T-cell (primary cell): ENCODE measurements at regions of chr12 and their contacts with region 1.

Region 1: GRCh38 chr12:32076941-32077340 is 29.7 kb upstream of the BICD1 start:
- DNase-seq: no peak
- ATAC-seq: no peak
- H3K4me3 ChIP-seq: no peak overlapping the region
- H3K4me3 Mint-ChIP-seq: no peak overlapping the region
- H3K27ac ChIP-seq: no peak overlapping the region
- H3K27ac Mint-ChIP-seq: no peak overlapping the region
- H3K4me1 ChIP-seq: no peaks in the 10 kb centered on the region
- H3K4me1 Mint-ChIP-seq: no peaks in the 10 kb centered on the region
- H3K27me3 ChIP-seq: no peaks in the 10 kb centered on the region
- H3K27me3 Mint-ChIP-seq: no peaks in the 10 kb centered on the region

Region 2: DNA sequence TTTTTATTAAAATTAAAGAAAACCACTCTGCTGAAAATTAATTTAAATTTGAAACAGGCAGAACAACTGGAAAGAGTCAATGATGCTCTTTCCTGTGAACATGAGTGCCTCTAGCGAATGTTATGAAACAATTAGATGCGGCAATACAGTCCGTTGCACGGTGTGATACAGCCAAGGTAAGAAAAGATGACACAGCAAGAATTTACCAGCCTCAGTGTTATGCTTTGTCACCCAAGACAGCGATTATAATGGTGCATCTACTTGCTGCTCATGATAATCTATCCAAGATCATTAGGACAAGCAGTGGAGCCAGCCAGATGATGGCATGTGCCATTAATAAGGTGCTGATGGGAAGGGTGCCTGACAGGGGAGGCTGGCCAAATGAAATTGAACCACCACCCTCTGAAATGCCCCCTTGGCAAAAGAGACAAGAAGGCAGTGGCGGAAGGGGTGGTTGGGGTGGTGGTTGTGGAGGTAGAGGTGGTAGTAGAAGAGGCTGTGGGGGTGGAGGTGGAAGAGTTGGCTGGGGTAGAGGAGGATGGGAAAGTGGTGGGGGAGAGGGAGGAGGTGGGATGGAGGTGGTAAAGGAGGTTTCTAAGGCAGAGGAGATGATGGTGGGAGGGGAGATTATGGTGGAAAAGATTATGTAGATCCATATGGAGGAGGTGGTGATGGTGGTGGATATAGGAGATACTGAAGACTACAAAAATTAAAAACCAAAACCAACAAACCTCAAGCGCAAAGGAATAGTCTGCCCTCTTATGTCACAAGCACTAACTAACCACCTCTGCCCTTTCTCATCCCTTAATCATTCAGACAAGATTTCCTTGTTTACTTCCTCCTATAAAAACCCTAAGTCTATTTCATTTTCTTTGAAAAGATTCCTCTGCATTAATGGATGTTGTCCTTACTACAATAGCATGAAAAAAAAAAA is 121.7 kb before region 1 on chr12:
- CTCF ChIA-PET with region 1: no interaction called
- POLR2A ChIA-PET with region 1: interaction called in 1 of 2 experiments, 16 read pairs
- DNase-seq: no peak
- ATAC-seq: no peak
- H3K4me3 ChIP-seq: no peak overlapping the region
- H3K4me3 Mint-ChIP-seq: peak overlapping the region in 1 of 3 donors; percentile 36
- H3K27ac ChIP-seq: no peak overlapping the region
- H3K27ac Mint-ChIP-seq: peak overlapping the region; percentile 78 to 81
- H3K4me1 ChIP-seq: peaks cover 3 to 42% of the 10 kb centered on the region in 2 experiments
- H3K4me1 Mint-ChIP-seq: peaks cover 57 to 68% (median 59%) of the 10 kb centered on the region in 3 donors
- H3K27me3 ChIP-seq: no peaks in the 10 kb centered on the region
- H3K27me3 Mint-ChIP-seq: no peaks in the 10 kb centered on the region

Region 3: DNA sequence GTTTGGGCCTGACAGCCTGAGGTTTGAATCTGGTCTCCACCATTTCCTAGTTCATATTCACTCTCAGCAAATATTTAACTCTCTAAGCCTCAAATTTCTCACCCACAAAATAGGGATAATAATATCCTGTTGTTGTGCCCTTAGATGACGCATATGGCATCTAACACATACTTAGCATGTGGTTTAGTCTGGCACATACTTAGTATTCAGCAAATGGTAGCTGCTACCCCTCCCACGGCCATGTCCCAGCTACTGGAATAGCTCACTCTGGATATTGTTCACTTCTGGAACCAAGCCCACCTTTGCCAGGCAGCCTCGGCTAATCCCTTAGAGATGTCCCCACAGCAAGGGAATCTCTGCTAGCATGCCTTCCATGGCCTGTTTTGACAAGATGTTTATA is 83.0 kb after region 1 on chr12:
- CTCF ChIA-PET with region 1: no interaction called
- POLR2A ChIA-PET with region 1: no interaction called
- DNase-seq: peak in 1 of 35 experiments; percentile 9
- ATAC-seq: no peak
- H3K4me3 ChIP-seq: no peak overlapping the region
- H3K4me3 Mint-ChIP-seq: no peak overlapping the region
- H3K27ac ChIP-seq: no peak overlapping the region
- H3K27ac Mint-ChIP-seq: no peak overlapping the region
- H3K4me1 ChIP-seq: no peaks in the 10 kb centered on the region
- H3K4me1 Mint-ChIP-seq: peaks cover 0 to 3% (median 1%) of the 10 kb centered on the region in 3 donors
- H3K27me3 ChIP-seq: no peaks in the 10 kb centered on the region
- H3K27me3 Mint-ChIP-seq: no peaks in the 10 kb centered on the region